ENCODE measurements at regions of chr1 and their contacts with region 1.

Region 1: DNA sequence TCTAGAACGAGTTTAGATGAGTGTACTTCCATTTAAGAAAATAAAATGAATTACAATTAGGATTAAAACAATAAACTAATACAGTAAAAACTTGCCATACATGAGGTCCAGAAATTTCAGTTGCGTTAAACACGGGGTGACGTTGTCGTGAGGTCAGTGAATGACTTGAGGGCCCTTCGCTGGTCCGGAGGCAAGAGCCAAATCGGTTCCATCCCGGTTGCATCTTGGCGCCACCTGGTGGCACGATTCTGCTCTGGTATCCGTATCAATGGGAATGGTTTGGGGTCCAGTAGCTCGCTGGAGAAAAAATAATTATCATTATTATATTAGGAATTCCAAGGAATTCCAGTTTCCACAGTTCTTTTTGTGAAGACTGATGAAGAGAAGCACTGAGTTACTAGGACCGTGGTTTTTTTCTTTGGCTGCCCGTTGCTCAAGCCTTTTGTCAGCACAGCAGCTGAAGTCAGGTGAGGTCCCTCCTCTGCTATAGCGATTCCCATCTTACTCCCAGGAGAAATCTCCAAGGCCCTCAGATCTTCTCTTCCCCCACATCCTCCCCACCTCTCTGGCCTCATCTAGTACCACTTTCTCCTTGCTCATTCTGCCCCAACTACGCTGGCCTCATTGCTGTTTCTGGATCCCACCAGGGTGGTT is 161.4 kb downstream of the SLC35F3 start:
- DNase-seq: peak; percentile 22 to 54 (median 45)
- H3K4me3 ChIP-seq: no peak overlapping the region
- H3K4me3 Mint-ChIP-seq: no peak overlapping the region
- H3K27ac ChIP-seq: no peak overlapping the region
- H3K27ac Mint-ChIP-seq: no peak overlapping the region
- H3K4me1 ChIP-seq: no peaks in the 10 kb centered on the region
- H3K4me1 Mint-ChIP-seq: peaks cover 2% of the 10 kb centered on the region
- H3K27me3 ChIP-seq: no peaks in the 10 kb centered on the region
- H3K27me3 Mint-ChIP-seq: peaks cover 3 to 5% (median 3%) of the 10 kb centered on the region in 3 donors
- CTCF ChIP-seq: peak; percentile 90

Region 2: GRCh38 chr1:233304489-233305102 is 761.3 kb before region 1 on chr1:
- intact Hi-C with region 1: loop called (anchors 5 to 10 kb)
- DNase-seq: peak in 2 of 3 donors; percentile 23 to 52
- H3K4me3 ChIP-seq: no peak overlapping the region
- H3K4me3 Mint-ChIP-seq: no peak overlapping the region
- H3K27ac ChIP-seq: no peak overlapping the region
- H3K27ac Mint-ChIP-seq: no peak overlapping the region
- H3K4me1 ChIP-seq: no peaks in the 10 kb centered on the region
- H3K4me1 Mint-ChIP-seq: no peaks in the 10 kb centered on the region
- H3K27me3 ChIP-seq: no peaks in the 10 kb centered on the region
- H3K27me3 Mint-ChIP-seq: peaks cover 0 to 2% (median 1%) of the 10 kb centered on the region in 3 donors
- CTCF ChIP-seq: peak; percentile 89

Region 3: DNA sequence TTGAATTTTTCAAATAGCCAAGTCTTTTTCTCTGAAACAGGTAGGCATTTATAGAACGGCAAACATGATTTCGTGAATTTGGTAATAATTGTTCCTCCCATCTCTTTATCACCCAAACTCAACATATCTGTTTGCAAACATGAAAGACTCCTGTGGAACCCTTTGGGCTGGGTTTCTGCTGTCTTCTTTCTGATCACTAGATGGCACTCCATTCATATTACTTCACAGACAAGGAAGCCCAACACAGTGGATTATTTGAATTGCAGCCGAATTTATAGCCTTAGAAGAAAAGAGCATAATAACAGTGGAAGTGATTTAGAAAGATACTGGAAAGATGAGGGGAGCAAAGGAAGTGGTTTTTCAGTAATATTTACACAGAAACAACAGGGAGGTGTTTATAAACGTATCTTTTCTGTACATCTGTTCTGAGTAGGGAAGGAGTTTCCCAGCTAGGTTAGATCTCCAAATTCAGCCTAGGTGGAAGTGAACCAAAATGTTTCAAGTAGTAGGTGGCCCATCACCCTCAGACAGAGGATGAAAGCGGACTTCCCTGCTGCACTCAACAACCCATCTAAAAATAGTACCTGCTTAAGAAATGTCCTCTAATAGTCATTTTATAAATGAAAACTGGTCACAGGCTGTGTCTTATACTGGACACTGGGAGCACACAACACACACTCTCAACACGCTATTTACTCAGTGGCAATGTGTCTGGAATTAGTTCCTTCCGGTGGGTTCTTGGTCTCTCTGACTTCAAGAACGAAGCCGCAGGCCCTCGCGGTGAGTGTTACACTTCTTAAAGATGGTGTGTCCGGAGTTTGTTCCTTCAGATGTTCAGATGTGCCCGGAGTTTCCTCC is 670.8 kb before region 1 on chr1:
- intact Hi-C with region 1: loop called in 1 of 2 experiments (anchors 10 kb)
- DNase-seq: peak in 2 of 3 donors; percentile 10 to 17
- H3K4me3 ChIP-seq: no peak overlapping the region
- H3K4me3 Mint-ChIP-seq: no peak overlapping the region
- H3K27ac ChIP-seq: no peak overlapping the region
- H3K27ac Mint-ChIP-seq: no peak overlapping the region
- H3K4me1 ChIP-seq: no peaks in the 10 kb centered on the region
- H3K4me1 Mint-ChIP-seq: no peaks in the 10 kb centered on the region
- H3K27me3 ChIP-seq: peaks cover 0 to 2% of the 10 kb centered on the region in 2 donors
- H3K27me3 Mint-ChIP-seq: peaks cover 4 to 7% (median 7%) of the 10 kb centered on the region in 3 donors
- CTCF ChIP-seq: peak; percentile 73

Measured in CD14-positive monocyte (primary cell).